ENCODE measurements at regions of chr16 and their contacts with region 1.

Region 1: DNA sequence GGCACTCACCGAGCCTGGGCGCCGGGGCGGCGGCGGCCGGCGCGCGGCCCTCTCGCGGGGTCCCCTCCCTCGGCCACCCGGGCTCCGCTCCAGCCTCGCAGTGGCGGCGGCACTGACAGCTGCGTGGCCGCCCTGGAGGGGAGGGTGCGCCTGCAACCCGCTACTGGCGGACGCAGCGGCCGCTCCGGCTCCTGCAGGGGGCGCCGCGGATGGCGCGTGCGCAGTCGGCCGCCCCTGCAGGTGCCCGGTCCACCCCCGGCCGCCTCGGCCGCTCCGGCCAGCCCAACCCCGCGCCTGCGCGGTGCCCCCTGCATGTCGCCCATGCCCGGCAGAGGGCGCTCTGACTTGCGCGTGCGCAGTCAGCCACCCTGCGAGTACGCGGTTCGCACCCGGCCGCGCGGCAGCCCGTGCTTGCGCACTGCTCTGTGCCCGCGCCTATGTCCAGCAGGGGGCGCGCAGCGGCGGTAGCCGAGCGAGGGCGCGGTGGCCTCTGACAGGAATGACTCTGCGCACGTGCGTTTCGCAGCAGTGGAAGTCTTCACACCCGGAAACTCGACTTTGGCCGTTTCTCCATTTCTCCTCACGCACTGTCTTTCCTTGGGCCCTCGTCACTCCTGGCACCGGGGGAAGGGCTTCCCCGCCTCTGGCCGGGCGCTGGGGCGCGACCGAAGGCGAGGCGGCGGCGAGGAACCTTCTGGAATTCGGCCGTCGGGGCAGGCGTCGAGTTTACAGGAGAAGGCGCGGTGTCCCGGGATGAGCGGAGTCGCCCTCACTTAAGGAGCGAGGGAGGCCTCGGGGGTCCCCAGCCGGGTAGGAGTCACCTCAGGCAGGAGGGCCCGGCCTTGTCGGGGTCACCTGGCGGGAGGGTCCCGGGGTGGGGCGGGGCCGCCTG is at the start of gene ABCA3:
- DNase-seq: peak; percentile 99
- ATAC-seq: peak; percentile 84
- H3K4me3 Mint-ChIP-seq: peak within 1 kb of the TSS; percentile 79
- H3K27ac Mint-ChIP-seq: peak within 1 kb of the TSS; percentile 66
- H3K4me1 Mint-ChIP-seq: peaks cover 13% of the 10 kb centered on the region
- H3K27me3 Mint-ChIP-seq: no peaks in the 10 kb centered on the region
- CTCF ChIP-seq: peak; percentile 95
- total RNA-seq, gene ABCA3: 2.4 and 3.1 TPM in 2 replicates

Region 2: GRCh38 chr16:1300664-1301476 is 1039.9 kb before region 1 on chr16:
- CTCF ChIA-PET with region 1: no interaction called
- POLR2A ChIA-PET with region 1: no interaction called
- intact Hi-C with region 1: no loop called
- DNase-seq: peak; percentile 83
- ATAC-seq: peak; percentile 73
- H3K4me3 Mint-ChIP-seq: no peak overlapping the region
- H3K27ac Mint-ChIP-seq: no peak overlapping the region
- H3K4me1 Mint-ChIP-seq: peaks cover 50% of the 10 kb centered on the region
- H3K27me3 Mint-ChIP-seq: peaks cover 7% of the 10 kb centered on the region
- CTCF ChIP-seq: no peak

Region 3: GRCh38 chr16:2194852-2195321 is 145.9 kb before region 1 on chr16:
- CTCF ChIA-PET with region 1: no interaction called
- POLR2A ChIA-PET with region 1: no interaction called
- intact Hi-C with region 1: loop called (anchors 1 kb)
- DNase-seq: no peak
- ATAC-seq: peak; percentile 76
- H3K4me3 Mint-ChIP-seq: peak overlapping the region; percentile 56
- H3K27ac Mint-ChIP-seq: no peak overlapping the region
- H3K4me1 Mint-ChIP-seq: peaks cover 8% of the 10 kb centered on the region
- H3K27me3 Mint-ChIP-seq: peaks cover 19% of the 10 kb centered on the region
- CTCF ChIP-seq: no peak

Region 4: GRCh38 chr16:2422123-2422867 is 81.5 kb after region 1 on chr16:
- CTCF ChIA-PET with region 1: no interaction called
- POLR2A ChIA-PET with region 1: no interaction called
- intact Hi-C with region 1: loop called (anchors 2 kb)
- DNase-seq: no peak
- ATAC-seq: no peak
- H3K4me3 Mint-ChIP-seq: no peak overlapping the region
- H3K27ac Mint-ChIP-seq: no peak overlapping the region
- H3K4me1 Mint-ChIP-seq: peaks cover 4% of the 10 kb centered on the region
- H3K27me3 Mint-ChIP-seq: no peaks in the 10 kb centered on the region
- CTCF ChIP-seq: no peak

Region 5: DNA sequence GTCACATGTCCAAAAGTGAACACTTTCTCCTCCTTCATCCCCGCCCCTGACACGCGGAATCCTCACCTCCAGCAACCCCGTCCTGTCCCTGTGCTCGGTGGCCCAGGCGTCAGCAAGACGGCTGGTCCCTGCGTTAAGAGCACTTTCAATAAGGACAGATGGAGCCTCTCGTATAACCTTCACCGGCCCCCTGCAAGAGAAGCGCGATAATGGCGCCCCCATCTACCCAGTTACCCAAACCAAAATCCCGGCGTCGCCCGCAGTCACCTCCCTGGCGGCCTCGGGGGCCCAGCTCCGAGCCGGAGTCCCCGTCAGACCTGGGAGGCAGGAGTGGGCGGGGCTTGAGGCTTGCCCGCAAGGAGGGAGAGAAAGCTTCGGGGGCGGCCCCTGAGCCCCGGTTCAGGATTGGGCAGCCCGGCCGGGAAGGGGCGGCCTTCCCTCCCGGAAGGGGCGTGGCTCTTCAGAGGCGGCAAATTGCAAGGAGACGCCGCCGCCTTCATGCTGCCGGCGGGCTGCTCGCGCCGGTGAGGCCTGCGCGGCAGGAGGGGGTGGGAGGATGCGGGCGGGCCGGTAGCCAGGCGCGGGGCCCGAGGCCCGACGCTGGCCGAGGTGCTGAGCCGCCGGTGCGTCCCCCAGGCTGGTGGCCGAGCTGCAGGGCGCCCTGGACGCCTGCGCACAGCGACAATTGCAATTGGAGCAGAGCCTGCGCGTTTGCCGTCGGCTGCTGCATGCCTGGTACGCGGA is 119.0 kb after region 1 on chr16 and contains the start of gene TEDC2:
- CTCF ChIA-PET with region 1: no interaction called
- POLR2A ChIA-PET with region 1: no interaction called
- intact Hi-C with region 1: no loop called
- DNase-seq: peak; percentile 91
- ATAC-seq: peak; percentile 100
- H3K4me3 Mint-ChIP-seq: peak within 1 kb of the TSS; percentile 86
- H3K27ac Mint-ChIP-seq: peak within 1 kb of the TSS; percentile 73
- H3K4me1 Mint-ChIP-seq: peaks cover 9% of the 10 kb centered on the region
- H3K27me3 Mint-ChIP-seq: no peaks in the 10 kb centered on the region
- CTCF ChIP-seq: no peak
- total RNA-seq, gene TEDC2: 3.4 and 4.4 TPM in 2 replicates

Region 6: DNA sequence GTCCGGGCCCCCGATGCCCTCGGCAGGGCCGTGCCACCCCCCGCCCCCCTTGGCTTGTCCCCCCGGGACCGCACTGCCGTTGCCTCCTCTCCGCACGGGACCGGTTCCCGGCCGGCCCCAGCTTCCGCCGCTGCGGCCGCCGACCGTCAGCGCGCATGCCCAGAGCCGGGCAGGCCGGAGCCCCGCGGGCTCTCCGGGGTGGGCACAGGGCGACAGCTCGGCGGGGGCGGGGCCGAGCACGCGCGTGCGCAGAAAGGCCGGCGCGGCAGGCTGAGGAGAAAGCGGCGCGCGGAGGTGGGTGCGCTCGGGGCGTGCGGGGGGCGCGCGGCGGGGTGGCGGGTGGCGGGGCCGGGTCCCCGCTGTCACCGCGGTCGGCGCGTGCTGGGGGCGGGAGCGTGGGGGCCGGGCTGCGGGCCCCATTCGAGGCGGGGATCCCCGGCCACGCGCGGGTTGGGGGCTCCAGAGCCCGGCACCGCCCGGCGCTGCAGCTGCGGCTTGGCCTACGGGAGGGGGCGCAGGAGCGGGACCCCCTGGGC is 134.1 kb after region 1 on chr16 and contains the start of gene TBC1D24:
- CTCF ChIA-PET with region 1: interaction called, 3 read pairs
- POLR2A ChIA-PET with region 1: no interaction called
- intact Hi-C with region 1: loop called (anchors 1 kb)
- DNase-seq: peak; percentile 89
- ATAC-seq: peak; percentile 79
- H3K4me3 Mint-ChIP-seq: peak within 1 kb of the TSS; percentile 83
- H3K27ac Mint-ChIP-seq: no peak within 1 kb of the TSS
- H3K4me1 Mint-ChIP-seq: peaks cover 25% of the 10 kb centered on the region
- H3K27me3 Mint-ChIP-seq: peaks cover 10% of the 10 kb centered on the region
- CTCF ChIP-seq: no peak
- total RNA-seq, gene TBC1D24: 9.1 and 12.6 TPM in 2 replicates

Measured in activated B cell treated with CpG ODN at 0.5 μM for 24 hours (primary cell).